Activated naive CD4-positive, alpha-beta T cell treated with anti-CD3 and anti-CD28 coated beads for 36 hours (primary cell): ENCODE measurements at regions of chr17 and their contacts with region 1.

Region 1: GRCh38 chr17:58006924-58007780 is at the start of gene SRSF1:
- DNase-seq: peak; percentile 99
- H3K4me3 Mint-ChIP-seq: peak within 1 kb of the TSS; percentile 99
- H3K27ac Mint-ChIP-seq: peak within 1 kb of the TSS; percentile 100
- H3K4me1 Mint-ChIP-seq: peaks cover 39% of the 10 kb centered on the region
- H3K27me3 Mint-ChIP-seq: no peaks in the 10 kb centered on the region
- total RNA-seq, gene SRSF1: 248 to 257 TPM

Region 2: GRCh38 chr17:57255776-57256681 is 751.1 kb before region 1 on chr17 and contains the start of gene MSI2:
- CTCF ChIA-PET with region 1: no interaction called
- intact Hi-C with region 1: loop called (anchors 5 kb)
- DNase-seq: peak; percentile 88
- H3K4me3 Mint-ChIP-seq: peak within 1 kb of the TSS; percentile 90
- H3K27ac Mint-ChIP-seq: peak within 1 kb of the TSS; percentile 86
- H3K4me1 Mint-ChIP-seq: peaks cover 38% of the 10 kb centered on the region
- H3K27me3 Mint-ChIP-seq: no peaks in the 10 kb centered on the region
- total RNA-seq, gene MSI2: 38.8 to 39.0 TPM

Region 3: GRCh38 chr17:57987580-57988421 is 19.4 kb before region 1 on chr17 and contains the start of gene VEZF1:
- CTCF ChIA-PET with region 1: interaction called, 34 read pairs
- intact Hi-C with region 1: loop called (anchors 1 kb)
- DNase-seq: peak; percentile 75
- H3K4me3 Mint-ChIP-seq: peak within 1 kb of the TSS; percentile 90
- H3K27ac Mint-ChIP-seq: peak within 1 kb of the TSS; percentile 89
- H3K4me1 Mint-ChIP-seq: peaks cover 57% of the 10 kb centered on the region
- H3K27me3 Mint-ChIP-seq: no peaks in the 10 kb centered on the region
- total RNA-seq, gene VEZF1: 21.7 to 22.0 TPM

Region 4: GRCh38 chr17:58032691-58033415 is 25.7 kb after region 1 on chr17:
- CTCF ChIA-PET with region 1: no interaction called
- intact Hi-C with region 1: no loop called
- DNase-seq: no peak
- H3K4me3 Mint-ChIP-seq: no peak overlapping the region
- H3K27ac Mint-ChIP-seq: no peak overlapping the region
- H3K4me1 Mint-ChIP-seq: no peaks in the 10 kb centered on the region
- H3K27me3 Mint-ChIP-seq: peaks cover 2% of the 10 kb centered on the region

Region 5: DNA sequence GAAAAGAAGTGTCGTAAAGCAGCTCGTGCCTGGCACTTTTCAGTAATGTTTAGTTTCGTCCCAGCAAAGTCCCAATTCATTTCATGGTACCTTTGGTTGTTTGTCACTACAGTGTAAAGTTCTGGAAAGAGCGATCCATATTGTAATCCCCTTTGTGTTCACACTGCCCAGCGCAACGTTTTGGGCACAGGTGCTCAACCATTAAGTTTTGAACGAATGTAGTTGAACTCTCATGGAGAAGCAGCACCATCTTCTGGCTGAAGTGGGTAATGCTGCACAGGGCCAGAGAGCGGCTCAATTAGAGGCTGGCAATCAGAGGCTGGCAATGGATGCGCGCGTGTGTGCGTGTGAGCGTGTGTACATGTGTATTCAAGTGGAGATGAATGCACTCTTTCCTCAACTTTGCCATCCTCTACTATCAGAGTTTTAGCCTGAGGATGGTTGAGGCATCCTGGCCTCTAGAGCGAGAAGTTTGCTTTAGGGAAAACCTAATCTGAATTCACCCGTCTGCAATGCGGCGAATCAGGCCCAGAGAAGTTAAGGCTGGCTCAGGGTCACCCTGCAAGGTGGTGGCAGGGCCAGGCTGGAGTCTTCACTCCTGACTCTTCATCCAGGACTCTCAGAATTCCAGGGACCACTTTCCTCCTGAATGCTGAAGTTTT is 105.9 kb after region 1 on chr17:
- CTCF ChIA-PET with region 1: interaction called, 4 read pairs
- intact Hi-C with region 1: loop called (anchors 1 kb)
- DNase-seq: peak; percentile 94
- H3K4me3 Mint-ChIP-seq: no peak overlapping the region
- H3K27ac Mint-ChIP-seq: no peak overlapping the region
- H3K4me1 Mint-ChIP-seq: no peaks in the 10 kb centered on the region
- H3K27me3 Mint-ChIP-seq: no peaks in the 10 kb centered on the region

Region 6: DNA sequence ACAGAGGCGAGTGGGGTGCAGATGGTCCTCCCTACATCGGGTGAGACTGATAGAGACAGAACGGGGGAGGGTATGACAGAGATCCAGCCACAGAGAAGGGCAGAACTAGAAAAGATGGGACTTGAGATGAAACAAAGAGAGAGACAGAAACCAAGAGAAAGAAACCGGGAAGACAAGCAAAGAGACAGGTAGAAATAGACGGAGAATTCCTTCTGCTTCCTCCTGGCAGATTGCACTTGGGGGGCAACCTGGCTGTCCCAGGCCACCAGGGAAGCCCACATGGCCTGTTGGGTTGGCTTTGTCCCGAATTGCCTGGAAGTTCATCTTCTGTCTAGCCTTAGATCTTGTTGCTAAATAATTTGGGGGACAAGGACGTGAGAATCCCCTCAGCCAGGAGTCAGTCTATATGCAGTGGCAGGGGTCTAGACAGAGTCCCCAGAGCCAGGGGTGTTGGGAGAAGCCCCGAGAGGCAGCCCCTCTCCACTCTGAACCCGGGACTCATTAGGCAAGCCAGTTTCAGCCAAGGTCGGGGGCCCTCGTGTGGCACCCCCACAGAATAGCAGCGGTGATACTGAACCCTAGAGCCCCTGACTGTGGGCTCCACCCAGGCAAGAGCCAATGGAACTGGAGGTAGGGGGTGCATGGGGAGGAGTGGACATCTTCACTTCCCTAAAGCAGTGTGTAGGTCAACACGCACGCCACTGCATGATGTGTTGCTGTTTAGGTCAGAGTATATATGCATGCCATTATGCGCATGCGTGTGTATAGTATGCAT is 322.1 kb after region 1 on chr17:
- CTCF ChIA-PET with region 1: no interaction called
- intact Hi-C with region 1: loop called (anchors 2 kb)
- DNase-seq: peak; percentile 91
- H3K4me3 Mint-ChIP-seq: peak overlapping the region; percentile 92
- H3K27ac Mint-ChIP-seq: peak overlapping the region; percentile 99
- H3K4me1 Mint-ChIP-seq: peaks cover 40% of the 10 kb centered on the region
- H3K27me3 Mint-ChIP-seq: peaks cover 14% of the 10 kb centered on the region